ENCODE measurements at regions of chr19 and their contacts with region 1.

Region 1: GRCh38 chr19:18562086-18562485 is 4.4 kb downstream of the KXD1 start:
- DNase-seq: no peak
- ATAC-seq: no peak
- H3K4me3 ChIP-seq: no peak overlapping the region
- H3K27ac ChIP-seq: peak overlapping the region; percentile 9 to 50
- H3K4me1 ChIP-seq: peaks cover 5 to 23% of the 10 kb centered on the region in 2 donors
- H3K27me3 ChIP-seq: no peaks in the 10 kb centered on the region
- CTCF ChIP-seq: no peak

Region 2: GRCh38 chr19:18469069-18469846 is 92.8 kb before region 1 on chr19:
- intact Hi-C with region 1: loop called in 1 of 2 experiments (anchors 10 kb)
- DNase-seq: peak in 3 of 4 donors; percentile 55 to 92 (median 69)
- ATAC-seq: peak; percentile 55
- H3K4me3 ChIP-seq: no peak overlapping the region
- H3K27ac ChIP-seq: no peak overlapping the region
- H3K4me1 ChIP-seq: peaks cover 15 to 65% of the 10 kb centered on the region in 2 donors
- H3K27me3 ChIP-seq: no peaks in the 10 kb centered on the region
- CTCF ChIP-seq: peak; percentile 65 to 86

Region 3: DNA sequence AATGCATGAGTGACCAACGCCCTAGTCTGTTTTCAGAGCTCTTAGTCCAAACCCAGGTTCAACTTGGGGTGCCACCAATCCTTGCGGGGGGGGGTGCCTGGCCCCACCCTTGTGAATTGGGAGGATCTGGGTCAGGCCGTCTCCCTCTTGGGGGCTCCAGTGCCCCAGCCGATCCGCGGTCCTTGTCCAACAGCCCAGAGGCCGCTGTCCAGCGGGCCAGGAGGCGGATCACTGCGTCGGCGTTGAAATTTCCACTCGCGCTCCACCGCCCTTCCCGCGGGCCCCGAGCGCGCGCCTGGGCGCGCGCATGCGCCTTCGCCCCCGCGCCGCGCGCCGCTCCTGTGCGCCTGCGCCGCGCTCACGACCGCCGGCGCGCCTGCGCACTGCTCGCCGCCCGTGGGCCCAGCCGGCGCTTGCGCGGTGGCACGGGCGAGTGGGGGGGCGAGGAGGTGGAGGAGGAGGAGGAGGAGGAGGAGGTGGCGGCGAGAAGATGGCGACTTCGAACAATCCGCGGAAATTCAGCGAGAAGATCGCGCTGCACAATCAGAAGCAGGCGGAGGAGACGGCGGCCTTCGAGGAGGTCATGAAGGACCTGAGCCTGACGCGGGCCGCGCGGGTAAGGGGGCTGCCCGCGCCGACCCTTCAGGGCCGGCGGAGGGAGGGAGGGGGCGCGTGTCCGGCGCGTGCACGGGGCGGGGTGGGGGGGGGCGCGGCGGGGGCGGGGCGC is 121.3 kb after region 1 on chr19 and contains the start of gene CRTC1:
- intact Hi-C with region 1: no loop called
- DNase-seq: peak; percentile 92 to 96 (median 94)
- ATAC-seq: peak; percentile 85
- H3K4me3 ChIP-seq: peak within 1 kb of the TSS; percentile 36 to 52
- H3K27ac ChIP-seq: peak within 1 kb of the TSS; percentile 74 to 83
- H3K4me1 ChIP-seq: peaks cover 10 to 34% of the 10 kb centered on the region in 2 donors
- H3K27me3 ChIP-seq: no peaks in the 10 kb centered on the region
- CTCF ChIP-seq: no peak
- polyA plus RNA-seq, gene CRTC1: 13.8 to 23.9 (median 16.5) TPM

Measured in left lung (tissue), 14 donors.